Natural killer cell (primary cell): ENCODE measurements at regions of chr3 and their contacts with region 1.

Region 1: GRCh38 chr3:10026084-10026890 is at the start of gene FANCD2:
- DNase-seq: peak; percentile 95 to 97
- ATAC-seq: peak; percentile 95 to 96 (median 95)
- H3K4me3 ChIP-seq: peak within 1 kb of the TSS; percentile 76
- H3K4me3 Mint-ChIP-seq: peak within 1 kb of the TSS; percentile 98
- H3K27ac ChIP-seq: peak within 1 kb of the TSS; percentile 73
- H3K27ac Mint-ChIP-seq: peak within 1 kb of the TSS; percentile 93 to 94
- H3K4me1 ChIP-seq: peaks cover 21% of the 10 kb centered on the region
- H3K4me1 Mint-ChIP-seq: peaks cover 0 to 20% of the 10 kb centered on the region in 2 donors
- H3K27me3 ChIP-seq: no peaks in the 10 kb centered on the region
- H3K27me3 Mint-ChIP-seq: no peaks in the 10 kb centered on the region
- CTCF ChIP-seq: no peak
- total RNA-seq, gene FANCD2: 9.0 to 15.7 (median 14.6) TPM

Region 2: GRCh38 chr3:9986237-9986725 is 40.0 kb before region 1 on chr3:
- intact Hi-C with region 1: loop called (anchors 1 kb)
- DNase-seq: no peak
- ATAC-seq: peak; percentile 58 to 66 (median 63)
- H3K4me3 ChIP-seq: peak overlapping the region; percentile 96
- H3K4me3 Mint-ChIP-seq: peak overlapping the region; percentile 99
- H3K27ac ChIP-seq: peak overlapping the region; percentile 86
- H3K27ac Mint-ChIP-seq: peak overlapping the region; percentile 97 to 98
- H3K4me1 ChIP-seq: peaks cover 18% of the 10 kb centered on the region
- H3K4me1 Mint-ChIP-seq: peaks cover 18 to 19% of the 10 kb centered on the region in 2 donors
- H3K27me3 ChIP-seq: no peaks in the 10 kb centered on the region
- H3K27me3 Mint-ChIP-seq: no peaks in the 10 kb centered on the region
- CTCF ChIP-seq: no peak

Region 3: GRCh38 chr3:10010486-10011465 is 15.5 kb before region 1 on chr3:
- intact Hi-C with region 1: loop called (anchors 1 kb)
- DNase-seq: peak; percentile 82 to 86
- ATAC-seq: peak; percentile 86 to 92 (median 88)
- H3K4me3 ChIP-seq: peak overlapping the region; percentile 38
- H3K4me3 Mint-ChIP-seq: peak overlapping the region; percentile 83
- H3K27ac ChIP-seq: no peak overlapping the region
- H3K27ac Mint-ChIP-seq: peak overlapping the region; percentile 5 to 19
- H3K4me1 ChIP-seq: peaks cover 34% of the 10 kb centered on the region
- H3K4me1 Mint-ChIP-seq: peaks cover 16 to 29% of the 10 kb centered on the region in 2 donors
- H3K27me3 ChIP-seq: no peaks in the 10 kb centered on the region
- H3K27me3 Mint-ChIP-seq: peaks cover 0 to 2% of the 10 kb centered on the region in 2 donors
- CTCF ChIP-seq: no peak

Region 4: DNA sequence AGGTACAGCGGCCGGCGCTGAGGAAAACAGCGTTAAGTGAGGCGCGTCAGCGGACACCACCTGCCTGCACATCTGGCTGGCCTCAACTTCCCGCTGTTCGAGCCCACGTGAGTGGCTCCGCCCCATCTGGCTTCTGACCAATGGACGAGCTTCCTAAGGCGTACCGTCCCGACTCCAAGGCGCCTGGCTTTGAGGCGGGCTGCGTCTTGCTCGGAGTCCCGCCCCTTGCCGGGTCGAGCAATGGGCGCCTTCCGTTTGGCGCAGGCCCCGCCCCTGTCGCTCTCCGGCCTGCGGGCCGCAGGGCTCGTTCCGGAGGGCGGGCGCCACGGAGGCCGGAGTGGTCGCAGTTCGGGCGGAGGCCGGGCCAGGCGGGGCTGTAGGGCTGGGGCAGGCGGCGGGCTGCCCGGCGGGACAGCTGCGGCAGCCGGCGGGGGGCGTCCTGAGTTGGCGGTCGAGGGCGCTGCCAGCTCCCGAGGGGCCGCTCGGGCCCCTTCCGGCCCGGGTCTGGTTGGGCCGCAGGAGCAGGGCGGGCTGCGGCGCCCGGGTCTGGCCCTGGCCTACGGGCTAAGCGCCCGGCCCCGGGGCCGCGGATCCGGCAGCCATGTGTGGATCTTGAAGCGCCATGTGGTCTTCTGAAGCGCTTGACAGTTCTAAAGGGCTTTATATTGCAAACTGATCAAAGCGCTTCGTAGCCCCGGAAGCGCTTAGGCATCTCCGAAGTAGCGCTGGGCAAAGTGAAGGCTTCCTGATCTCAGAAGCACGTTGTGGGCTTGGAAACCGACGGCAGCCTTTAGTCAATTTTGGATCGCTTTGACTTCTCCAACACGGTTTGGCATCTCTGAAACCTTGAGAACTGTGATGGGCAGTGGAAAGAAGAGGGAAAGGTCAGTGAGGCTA is 222.1 kb after region 1 on chr3 and contains the start of gene TATDN2:
- intact Hi-C with region 1: loop called (anchors 1 kb)
- DNase-seq: peak; percentile 81 to 98
- ATAC-seq: peak; percentile 94 to 98 (median 94)
- H3K4me3 ChIP-seq: peak within 1 kb of the TSS; percentile 68
- H3K4me3 Mint-ChIP-seq: peak within 1 kb of the TSS; percentile 97
- H3K27ac ChIP-seq: peak within 1 kb of the TSS; percentile 41
- H3K27ac Mint-ChIP-seq: peak within 1 kb of the TSS; percentile 90 to 95
- H3K4me1 ChIP-seq: peaks cover 30% of the 10 kb centered on the region
- H3K4me1 Mint-ChIP-seq: peaks cover 57 to 61% of the 10 kb centered on the region in 2 donors
- H3K27me3 ChIP-seq: no peaks in the 10 kb centered on the region
- H3K27me3 Mint-ChIP-seq: no peaks in the 10 kb centered on the region
- CTCF ChIP-seq: no peak
- total RNA-seq, gene TATDN2: 75.6 to 99.4 (median 88.4) TPM